ENCODE measurements at regions of chr7 and their contacts with region 1.

Region 1: GRCh38 chr7:107150375-107151073 is 18.3 kb upstream of the HBP1 start:
- DNase-seq: peak; percentile 66 to 96 (median 85)
- H3K4me3 ChIP-seq: no peak overlapping the region
- H3K27ac ChIP-seq: no peak overlapping the region
- H3K4me1 ChIP-seq: peaks cover 6 to 15% of the 10 kb centered on the region in 2 donors
- H3K27me3 ChIP-seq: no peaks in the 10 kb centered on the region
- CTCF ChIP-seq: peak; percentile 64 to 79 (median 68)
- POLR2A ChIP-seq: no peak

Region 2: GRCh38 chr7:106736508-106737201 is 413.9 kb before region 1 on chr7:
- intact Hi-C with region 1: no loop called
- DNase-seq: peak in 5 of 7 donors; percentile 21 to 56 (median 50)
- H3K4me3 ChIP-seq: no peak overlapping the region
- H3K27ac ChIP-seq: no peak overlapping the region
- H3K4me1 ChIP-seq: peaks cover 0 to 3% of the 10 kb centered on the region in 2 donors
- H3K27me3 ChIP-seq: no peaks in the 10 kb centered on the region
- CTCF ChIP-seq: peak; percentile 39 to 68 (median 58)
- POLR2A ChIP-seq: no peak

Region 3: GRCh38 chr7:106793015-106793975 is 357.2 kb before region 1 on chr7:
- intact Hi-C with region 1: loop called (anchors 5 to 10 kb)
- DNase-seq: no peak
- H3K4me3 ChIP-seq: no peak overlapping the region
- H3K27ac ChIP-seq: no peak overlapping the region
- H3K4me1 ChIP-seq: no peaks in the 10 kb centered on the region
- H3K27me3 ChIP-seq: no peaks in the 10 kb centered on the region
- CTCF ChIP-seq: peak; percentile 38 to 63 (median 60)
- POLR2A ChIP-seq: no peak

Region 4: GRCh38 chr7:106947244-106947728 is 203.2 kb before region 1 on chr7:
- intact Hi-C with region 1: loop called (anchors 2 to 10 kb)
- DNase-seq: peak; percentile 66 to 91 (median 69)
- H3K4me3 ChIP-seq: no peak overlapping the region
- H3K27ac ChIP-seq: no peak overlapping the region
- H3K4me1 ChIP-seq: peaks cover 0 to 1% of the 10 kb centered on the region in 2 donors
- H3K27me3 ChIP-seq: no peaks in the 10 kb centered on the region
- CTCF ChIP-seq: peak; percentile 51 to 89 (median 78)
- POLR2A ChIP-seq: no peak

Region 5: DNA sequence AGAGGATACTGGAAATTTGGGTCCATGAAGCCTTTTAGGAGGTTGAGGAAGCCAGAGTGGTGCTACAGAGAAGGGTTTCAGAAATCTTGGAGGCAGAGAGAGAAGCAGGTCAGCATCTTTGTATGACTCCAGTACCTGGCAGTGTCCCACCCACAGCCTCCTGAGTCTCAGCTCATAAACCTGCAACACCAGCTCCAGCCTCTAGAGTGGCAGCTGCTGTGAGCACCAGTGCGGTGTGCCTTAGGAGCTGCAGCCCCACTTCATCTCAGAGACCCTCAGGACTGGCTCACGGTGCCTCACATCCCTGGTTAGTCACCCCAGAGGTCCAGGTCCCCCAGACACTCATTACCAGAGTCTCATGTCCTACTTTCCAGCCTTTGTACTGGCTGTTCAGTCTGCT is 190.8 kb before region 1 on chr7:
- intact Hi-C with region 1: loop called in 1 of 2 experiments (anchors 10 kb)
- DNase-seq: peak in 1 of 7 donors; percentile 7
- H3K4me3 ChIP-seq: no peak overlapping the region
- H3K27ac ChIP-seq: no peak overlapping the region
- H3K4me1 ChIP-seq: no peaks in the 10 kb centered on the region
- H3K27me3 ChIP-seq: no peaks in the 10 kb centered on the region
- CTCF ChIP-seq: no peak
- POLR2A ChIP-seq: no peak

Region 6: DNA sequence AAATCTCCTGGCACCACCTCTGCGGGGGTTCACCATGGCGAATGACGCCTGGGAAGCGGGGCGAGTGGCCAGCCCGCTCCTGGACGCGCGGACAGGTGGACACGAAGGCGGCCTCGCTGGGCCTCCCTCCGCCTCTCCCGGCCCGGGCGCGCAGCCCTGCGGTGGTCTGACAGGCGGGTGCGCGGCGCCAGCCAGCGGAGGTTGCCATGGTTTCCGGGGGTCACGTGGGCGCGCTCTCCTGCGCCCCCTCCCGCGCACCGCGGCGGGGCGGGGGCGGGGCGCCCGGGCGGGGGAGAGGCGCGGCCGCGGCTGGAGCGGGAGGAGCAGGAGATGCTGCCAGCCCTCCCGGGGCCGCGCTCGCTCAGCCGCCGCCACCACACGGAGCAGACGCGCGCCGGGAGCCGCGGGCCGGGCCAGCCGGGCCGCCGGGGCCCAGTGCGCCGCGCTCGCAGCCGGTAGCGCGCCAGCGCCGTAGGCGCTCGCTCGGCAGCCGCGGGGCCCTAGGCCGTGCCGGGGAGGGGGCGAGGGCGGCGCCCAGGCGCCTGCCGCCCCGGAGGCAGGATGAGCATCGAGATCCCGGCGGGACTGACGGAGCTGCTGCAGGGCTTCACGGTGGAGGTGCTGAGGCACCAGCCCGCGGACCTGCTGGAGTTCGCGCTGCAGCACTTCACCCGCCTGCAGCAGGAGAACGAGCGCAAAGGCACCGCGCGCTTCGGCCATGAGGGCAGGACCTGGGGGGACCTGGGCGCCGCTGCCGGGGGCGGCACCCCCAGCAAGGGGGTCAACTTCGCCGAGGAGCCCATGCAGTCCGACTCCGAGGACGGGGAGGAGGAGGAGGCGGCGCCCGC is 106.0 kb before region 1 on chr7 and contains the start of gene PRKAR2B:
- intact Hi-C with region 1: loop called in 1 of 2 experiments (anchors 10 kb)
- DNase-seq: peak; percentile 80 to 90 (median 87)
- H3K4me3 ChIP-seq: peak within 1 kb of the TSS; percentile 49 to 81 (median 67)
- H3K27ac ChIP-seq: peak within 1 kb of the TSS in 4 of 5 donors; percentile 57 to 90 (median 74)
- H3K4me1 ChIP-seq: peaks cover 15 to 37% of the 10 kb centered on the region in 2 donors
- H3K27me3 ChIP-seq: no peaks in the 10 kb centered on the region
- CTCF ChIP-seq: peak in 2 of 6 experiments; percentile 14 to 25
- POLR2A ChIP-seq: peak; percentile 64 to 80
- total RNA-seq, gene PRKAR2B: 58.2 to 145 (median 87.9) TPM

Measured in adrenal gland (tissue), 19 donors.